Dendritic cell treated with granulocyte-macrophage colony-stimulating factor and Interleukin-4, amounts not matched to agents 40 ng/mL and 50 ng/mL, for 4 days (primary cell): ENCODE measurements at regions of chr7 and their contacts with region 1.

Region 1: DNA sequence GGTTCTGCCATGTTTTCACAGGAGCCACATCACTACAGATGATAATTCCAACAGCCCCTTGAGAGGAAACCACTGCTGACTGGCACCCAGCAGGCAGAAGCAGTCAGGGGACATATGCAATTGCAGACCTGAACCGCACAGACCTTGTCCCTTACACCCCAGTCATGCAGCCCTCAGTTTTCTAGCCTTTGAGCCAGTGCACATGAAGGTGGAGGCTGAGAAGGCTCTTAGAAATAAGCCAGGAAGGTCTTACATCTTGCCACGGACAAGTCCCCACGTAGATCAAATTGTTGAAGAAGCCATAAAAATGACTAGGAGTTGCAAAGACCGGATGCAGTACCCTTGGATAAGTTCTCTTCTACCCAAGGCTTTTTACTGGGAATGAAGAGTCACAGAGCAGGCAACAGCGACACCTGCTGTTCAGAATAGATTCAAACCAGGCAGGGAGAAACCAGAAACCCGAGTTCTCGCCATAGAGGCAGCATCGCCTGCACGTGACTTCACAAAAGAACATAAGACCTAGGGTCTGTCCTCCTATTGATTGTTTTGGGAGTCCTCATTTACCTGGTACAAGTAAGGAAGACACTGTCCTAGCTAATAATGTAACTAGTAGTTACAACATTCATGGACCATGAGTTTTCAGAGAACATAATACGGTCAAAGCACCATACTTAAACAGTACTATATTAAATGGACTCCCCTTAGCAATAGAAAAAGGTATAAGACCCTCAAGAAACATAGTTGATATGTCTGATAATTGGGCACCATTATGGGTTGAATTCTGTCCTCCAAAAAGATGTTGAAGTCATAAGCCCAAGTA is 11.1 kb downstream of the STEAP1B start:
- H3K4me3 Mint-ChIP-seq: no peak overlapping the region
- H3K27ac Mint-ChIP-seq: no peak overlapping the region
- H3K4me1 Mint-ChIP-seq: no peaks in the 10 kb centered on the region
- H3K27me3 Mint-ChIP-seq: peaks cover 6% of the 10 kb centered on the region

Region 2: GRCh38 chr7:22103255-22103969 is 385.4 kb before region 1 on chr7:
- intact Hi-C with region 1: loop called (anchors 1 kb)
- H3K4me3 Mint-ChIP-seq: no peak overlapping the region
- H3K27ac Mint-ChIP-seq: no peak overlapping the region
- H3K4me1 Mint-ChIP-seq: no peaks in the 10 kb centered on the region
- H3K27me3 Mint-ChIP-seq: peaks cover 6% of the 10 kb centered on the region

Region 3: DNA sequence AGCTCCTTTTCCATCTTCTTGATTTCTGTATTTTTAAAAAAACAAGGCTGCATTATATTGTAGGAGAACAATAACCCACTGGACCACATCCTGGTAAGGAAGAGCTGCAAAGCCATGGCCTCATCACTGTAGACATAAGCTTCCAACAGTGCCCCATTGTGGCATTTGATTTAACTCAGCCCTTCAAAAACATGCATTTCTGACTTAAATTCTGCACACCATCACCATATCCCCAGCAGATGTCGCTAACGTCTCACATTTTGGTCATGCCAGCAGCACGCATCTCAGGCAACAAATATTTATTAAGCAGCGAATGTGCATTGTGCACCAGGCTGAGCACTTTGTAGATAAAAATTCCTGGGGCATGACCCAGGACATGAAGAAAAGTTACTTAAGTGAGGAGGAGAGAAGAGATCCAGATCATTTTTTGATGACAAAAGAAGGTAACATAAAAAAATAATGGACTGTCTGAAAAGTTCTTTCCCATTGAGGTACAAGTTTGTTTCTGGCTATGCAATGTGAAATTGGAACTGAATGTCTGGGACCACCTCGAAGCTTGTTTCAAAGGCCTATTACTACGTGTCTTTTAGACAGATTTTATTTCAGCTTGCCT is 378.5 kb before region 1 on chr7:
- intact Hi-C with region 1: loop called (anchors 1 kb)
- H3K4me3 Mint-ChIP-seq: no peak overlapping the region
- H3K27ac Mint-ChIP-seq: no peak overlapping the region
- H3K4me1 Mint-ChIP-seq: no peaks in the 10 kb centered on the region
- H3K27me3 Mint-ChIP-seq: no peaks in the 10 kb centered on the region